ENCODE measurements at regions of chr1 and their contacts with region 1.

Region 1: DNA sequence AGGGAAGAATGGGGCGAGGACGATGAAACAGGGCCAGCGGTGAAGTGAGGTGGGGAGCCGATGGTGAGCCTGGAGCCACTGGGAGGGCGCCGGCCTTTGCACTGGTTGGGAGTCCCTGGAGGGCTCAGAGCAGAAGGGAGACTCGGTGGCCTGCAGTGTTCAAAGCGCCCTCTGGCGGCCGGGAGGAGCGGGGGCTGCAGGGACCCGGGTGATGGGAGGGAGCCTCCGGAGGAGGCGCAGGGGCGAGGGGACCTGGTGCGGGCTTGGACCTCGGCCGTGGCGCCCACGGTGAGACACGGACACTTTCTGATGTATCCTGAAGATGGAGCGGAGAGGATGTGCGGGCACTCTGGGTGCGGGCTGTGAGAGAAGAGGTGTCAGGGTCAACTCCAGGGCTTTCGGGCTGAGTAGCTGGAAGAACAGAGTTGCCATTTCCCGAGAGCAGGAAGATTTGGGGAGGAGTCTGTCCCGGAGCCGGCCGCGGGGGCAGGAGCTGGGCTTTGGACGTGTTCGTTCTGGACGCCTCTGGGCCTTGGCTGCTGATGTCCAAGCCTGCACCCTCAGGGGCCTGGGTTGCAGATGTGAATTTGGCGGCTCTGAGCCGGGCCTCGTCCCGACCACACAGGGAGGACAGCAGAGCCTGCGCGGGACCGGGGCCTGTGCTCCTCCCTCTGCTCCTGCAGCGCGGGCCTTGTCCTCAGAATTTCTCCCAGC is 29.7 kb downstream of the HEYL start:
- DNase-seq: peak; percentile 94
- H3K4me3 Mint-ChIP-seq: peak overlapping the region; percentile 27
- H3K27ac Mint-ChIP-seq: no peak overlapping the region
- H3K4me1 Mint-ChIP-seq: peaks cover 12% of the 10 kb centered on the region
- H3K27me3 Mint-ChIP-seq: no peaks in the 10 kb centered on the region

Region 2: DNA sequence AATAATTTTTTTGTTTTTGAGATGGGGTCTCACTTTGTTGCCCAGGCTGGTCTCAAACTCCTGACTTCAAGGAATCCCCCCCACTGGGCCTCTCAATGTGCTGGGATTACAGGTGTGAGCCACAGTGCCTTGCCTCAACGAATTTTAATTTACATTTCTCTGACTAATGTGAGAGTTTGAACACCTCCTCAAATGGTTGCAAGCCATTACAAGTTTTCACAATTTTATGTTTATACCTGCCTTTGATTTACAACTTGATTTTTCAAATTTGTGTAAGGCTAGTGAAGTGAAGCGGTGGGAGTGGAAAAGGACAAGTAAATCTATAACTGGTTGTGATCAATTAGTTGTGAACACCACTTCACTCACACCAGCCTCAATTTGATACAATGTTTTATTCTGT is 659.2 kb before region 1 on chr1:
- intact Hi-C with region 1: no loop called
- DNase-seq: no peak
- H3K4me3 Mint-ChIP-seq: no peak overlapping the region
- H3K27ac Mint-ChIP-seq: no peak overlapping the region
- H3K4me1 Mint-ChIP-seq: peaks cover 8% of the 10 kb centered on the region
- H3K27me3 Mint-ChIP-seq: no peaks in the 10 kb centered on the region

Region 3: GRCh38 chr1:39596163-39596562 is 13.6 kb before region 1 on chr1:
- intact Hi-C with region 1: no loop called
- DNase-seq: no peak
- H3K4me3 Mint-ChIP-seq: no peak overlapping the region
- H3K27ac Mint-ChIP-seq: no peak overlapping the region
- H3K4me1 Mint-ChIP-seq: peaks cover 5% of the 10 kb centered on the region
- H3K27me3 Mint-ChIP-seq: peaks cover 15% of the 10 kb centered on the region

Region 4: DNA sequence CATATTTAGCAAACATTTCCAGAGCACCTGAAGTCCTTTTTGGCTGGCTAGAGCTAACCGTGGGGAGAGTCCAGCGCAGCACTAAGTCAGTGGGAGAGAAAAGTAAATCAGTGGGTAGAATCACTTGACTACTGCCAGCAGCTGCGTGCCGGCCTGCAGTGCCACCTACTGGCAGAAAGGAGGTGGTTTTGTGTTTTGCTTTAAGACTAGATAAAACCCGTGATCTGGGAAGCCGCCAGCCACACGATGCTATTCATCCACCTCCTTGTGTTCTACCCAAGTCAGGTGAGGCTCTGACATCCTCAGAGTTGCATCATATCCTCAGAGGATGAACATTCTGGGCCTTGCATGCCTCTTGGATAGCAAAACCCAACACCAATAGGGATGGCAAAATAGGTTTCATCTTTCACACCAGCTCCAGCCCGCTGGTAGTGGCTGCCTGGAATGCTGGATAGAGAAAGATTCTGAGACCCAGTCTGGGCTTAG is 43.8 kb after region 1 on chr1:
- intact Hi-C with region 1: loop called (anchors 1 kb)
- DNase-seq: peak; percentile 91
- H3K4me3 Mint-ChIP-seq: no peak overlapping the region
- H3K27ac Mint-ChIP-seq: no peak overlapping the region
- H3K4me1 Mint-ChIP-seq: peaks cover 15% of the 10 kb centered on the region
- H3K27me3 Mint-ChIP-seq: peaks cover 6% of the 10 kb centered on the region

Region 5: DNA sequence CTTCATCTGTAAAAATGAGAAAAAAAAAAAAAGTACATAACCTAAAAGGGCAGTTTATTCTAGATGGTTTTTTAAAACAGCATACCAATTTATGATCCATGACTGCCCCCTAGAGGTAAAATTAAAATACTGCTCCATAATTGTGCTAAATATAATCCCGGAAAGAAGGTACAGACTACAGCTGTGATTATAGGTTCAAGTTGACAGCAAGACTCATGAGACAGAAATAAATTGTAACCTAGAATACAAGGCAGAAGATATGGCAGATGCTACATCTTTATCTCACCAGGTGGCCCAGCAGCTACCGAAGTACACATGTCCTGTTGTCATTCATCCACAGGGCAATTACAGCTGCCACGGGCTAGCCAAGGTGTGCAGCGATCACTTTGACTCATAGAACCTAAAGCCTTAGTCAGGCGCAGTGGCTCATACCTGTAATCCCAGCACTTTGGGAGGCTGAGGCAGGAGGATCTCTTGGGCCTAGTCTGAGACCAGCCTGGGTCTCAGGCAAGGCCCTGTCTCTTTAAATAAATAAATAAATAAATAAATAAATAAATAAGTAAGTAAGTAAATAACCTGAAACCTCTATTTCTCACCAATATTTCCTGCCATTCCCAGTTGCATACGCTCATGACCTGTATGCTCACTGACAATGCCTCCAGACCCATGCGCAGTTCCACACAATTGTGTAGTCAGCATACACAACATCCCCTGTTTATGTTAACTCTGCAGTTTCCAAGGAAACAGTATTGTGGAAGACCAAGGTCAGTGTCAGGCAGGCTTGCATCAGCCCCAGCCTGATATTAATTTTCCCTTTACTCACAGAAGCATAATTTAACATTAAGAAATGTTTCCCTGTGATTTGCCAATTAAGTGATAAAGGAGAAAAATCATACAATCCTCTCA is 110.6 kb after region 1 on chr1:
- intact Hi-C with region 1: loop called (anchors 1 kb)
- DNase-seq: peak; percentile 70
- H3K4me3 Mint-ChIP-seq: no peak overlapping the region
- H3K27ac Mint-ChIP-seq: no peak overlapping the region
- H3K4me1 Mint-ChIP-seq: no peaks in the 10 kb centered on the region
- H3K27me3 Mint-ChIP-seq: peaks cover 54% of the 10 kb centered on the region

Region 6: DNA sequence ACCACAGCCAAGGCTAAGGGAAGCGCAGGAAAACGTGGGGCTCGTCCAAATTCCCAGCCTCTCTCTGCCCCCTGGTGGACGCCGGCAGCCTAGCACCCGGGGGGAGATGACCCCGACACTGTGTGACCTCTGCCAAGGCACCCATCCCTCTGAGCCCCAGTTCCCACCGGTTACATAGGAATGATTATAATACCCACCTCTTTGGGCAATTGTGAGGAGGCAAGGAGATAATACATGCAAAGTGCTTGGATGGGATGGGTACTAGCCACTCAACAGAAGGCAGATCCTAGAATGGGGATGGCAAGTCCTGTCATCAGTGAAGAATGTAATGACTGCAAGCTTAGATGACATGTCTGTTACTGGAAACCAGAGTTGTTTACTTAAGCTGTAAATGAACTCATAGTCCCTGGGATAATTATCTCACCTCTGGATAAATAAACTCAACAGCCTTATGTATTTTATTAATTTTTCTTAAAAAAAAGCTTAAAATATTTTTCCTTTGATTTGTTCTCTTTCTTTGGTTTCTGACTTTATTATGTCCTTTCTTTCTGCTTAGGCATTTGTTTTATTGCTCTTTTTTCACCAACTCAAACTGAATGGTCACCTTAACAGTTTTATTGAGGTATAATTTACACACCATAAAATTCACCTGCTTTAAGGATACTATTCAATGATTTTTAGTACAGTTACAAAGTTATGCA is 190.1 kb after region 1 on chr1:
- intact Hi-C with region 1: loop called (anchors 10 kb)
- DNase-seq: peak; percentile 89
- H3K4me3 Mint-ChIP-seq: peak overlapping the region; percentile 67
- H3K27ac Mint-ChIP-seq: peak overlapping the region; percentile 76
- H3K4me1 Mint-ChIP-seq: peaks cover 11% of the 10 kb centered on the region
- H3K27me3 Mint-ChIP-seq: peaks cover 10% of the 10 kb centered on the region